K562 (cell line): ENCODE measurements at regions of chr17 and their contacts with region 1.

Region 1: DNA sequence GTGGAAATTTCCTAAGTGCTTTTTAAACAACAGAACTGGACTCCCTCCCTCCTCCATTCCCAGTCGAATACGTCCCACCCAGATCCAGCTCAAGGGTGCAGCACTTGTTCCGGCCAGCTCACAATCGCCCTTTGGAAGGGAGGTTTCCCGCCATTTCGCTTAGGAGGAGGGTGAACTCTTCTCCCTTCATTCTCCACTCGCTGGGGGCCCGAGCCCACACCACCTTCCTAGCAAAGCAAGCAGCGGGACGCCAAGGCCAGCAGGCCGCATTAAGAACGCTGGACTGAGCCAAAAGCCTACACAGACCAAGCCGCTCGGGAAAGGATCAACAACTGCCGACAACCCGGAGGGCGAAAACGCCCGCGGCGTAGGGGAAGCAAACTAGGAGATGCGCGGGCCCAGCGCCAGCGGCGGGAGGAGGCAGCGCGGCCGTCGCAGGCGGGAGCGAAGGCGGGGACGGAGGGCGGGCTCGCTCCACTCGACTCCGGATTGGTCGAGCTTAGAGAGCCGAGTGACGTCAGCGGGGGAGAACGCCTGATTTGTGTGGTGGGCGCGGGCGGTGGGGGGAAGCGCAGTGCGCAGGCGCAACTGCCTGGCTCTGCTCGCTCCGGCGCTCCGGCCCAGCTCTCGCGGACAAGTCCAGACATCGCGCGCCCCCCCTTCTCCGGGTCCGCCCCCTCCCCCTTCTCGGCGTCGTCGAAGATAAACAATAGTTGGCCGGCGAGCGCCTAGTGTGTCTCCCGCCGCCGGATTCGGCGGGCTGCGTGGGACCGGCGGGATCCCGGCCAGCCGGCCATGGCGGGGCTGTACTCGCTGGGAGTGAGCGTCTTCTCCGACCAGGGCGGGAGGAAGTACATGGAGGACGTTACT is at the start of gene PPM1D:
- DNase-seq: peak; percentile 99
- ATAC-seq: peak; percentile 90
- H3K4me3 ChIP-seq: peak within 1 kb of the TSS; percentile 70
- H3K27ac ChIP-seq: peak within 1 kb of the TSS; percentile 97
- H3K4me1 ChIP-seq: peaks cover 10 to 23% of the 10 kb centered on the region in 2 experiments; a peak in 4 of 5 replicates
- H3K27me3 ChIP-seq: no peaks in the 10 kb centered on the region
- CTCF ChIP-seq: 0 out of 6 replicates have a peak, but pooled peaks of 1 of the 3 experiments have one; percentile 1
- EP300 ChIP-seq: no peak
- POLR2A ChIP-seq: peak; percentile 99
- RAD21 ChIP-seq: no peak
- polyA plus RNA-seq, gene PPM1D: 2.1 to 2.7 TPM

Region 2: GRCh38 chr17:60392042-60392844 is 207.6 kb before region 1 on chr17 and contains the start of gene USP32:
- CTCF ChIA-PET with region 1: no interaction called
- POLR2A ChIA-PET with region 1: no interaction called
- in situ Hi-C with region 1: no loop called
- intact Hi-C with region 1: loop called (anchors 5 kb)
- DNase-seq: peak; percentile 93 to 98 (median 94)
- ATAC-seq: peak; percentile 86
- H3K4me3 ChIP-seq: peak within 1 kb of the TSS; percentile 84
- H3K27ac ChIP-seq: peak within 1 kb of the TSS; percentile 94
- H3K4me1 ChIP-seq: peaks cover 3 to 11% of the 10 kb centered on the region in 2 experiments
- H3K27me3 ChIP-seq: no peaks in the 10 kb centered on the region
- CTCF ChIP-seq: peak; percentile 29 to 47 (median 40); a peak in 4 of 6 replicates
- EP300 ChIP-seq: peak; percentile 81
- POLR2A ChIP-seq: peak; percentile 94
- RAD21 ChIP-seq: no peak
- polyA plus RNA-seq, gene USP32: 18.0 to 19.7 TPM

Region 3: DNA sequence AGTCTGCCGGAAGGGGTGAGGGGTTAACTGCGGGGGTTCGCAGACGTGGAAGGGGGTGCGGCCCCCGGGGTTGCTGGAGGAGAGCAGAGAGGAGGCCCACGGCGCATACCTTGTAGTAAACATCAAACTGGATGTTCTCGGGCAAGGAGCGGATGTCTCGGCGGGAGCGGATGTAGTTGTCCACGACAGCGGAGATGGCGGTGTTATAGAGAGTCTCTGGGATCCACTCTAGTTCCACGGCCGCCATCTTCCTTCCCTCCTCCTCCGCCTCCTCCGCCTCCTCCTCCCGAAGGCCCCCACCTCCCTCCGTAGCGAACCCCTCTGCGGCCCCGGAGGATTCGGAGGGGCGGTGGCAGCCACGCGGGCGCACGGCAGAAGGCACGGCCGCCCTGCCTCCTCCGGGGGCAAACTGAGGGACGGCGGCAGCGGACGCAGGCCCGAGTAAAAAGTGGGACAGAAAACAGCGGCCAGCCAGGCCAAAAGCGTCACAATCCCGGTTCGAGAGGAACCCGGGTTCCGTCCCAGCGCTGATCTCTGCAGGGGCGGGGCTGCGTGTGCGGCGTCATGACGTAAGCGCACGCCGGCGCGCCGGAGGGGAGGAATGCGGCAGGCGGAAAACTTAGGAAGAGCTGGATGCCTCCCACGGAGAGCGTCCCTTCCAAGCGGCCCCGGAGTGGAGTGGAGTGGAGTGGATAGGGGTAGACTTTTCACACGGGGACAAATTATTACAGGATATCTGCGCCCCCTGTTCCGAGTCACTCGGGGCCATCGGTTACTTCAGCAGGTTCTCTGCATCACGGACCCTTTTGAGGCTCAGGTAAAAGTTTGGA is 74.0 kb before region 1 on chr17 and contains the start of gene APPBP2:
- CTCF ChIA-PET with region 1: no interaction called
- POLR2A ChIA-PET with region 1: interaction called, 3 read pairs
- in situ Hi-C with region 1: no loop called
- intact Hi-C with region 1: loop called (anchors 5 kb)
- DNase-seq: peak; percentile 83 to 90 (median 90)
- ATAC-seq: peak; percentile 93
- H3K4me3 ChIP-seq: peak within 1 kb of the TSS; percentile 96
- H3K27ac ChIP-seq: peak within 1 kb of the TSS; percentile 90
- H3K4me1 ChIP-seq: no peaks in the 10 kb centered on the region
- H3K27me3 ChIP-seq: no peaks in the 10 kb centered on the region
- CTCF ChIP-seq: no peak
- EP300 ChIP-seq: no peak
- POLR2A ChIP-seq: peak; percentile 91
- RAD21 ChIP-seq: peak in 1 of 2 experiments; percentile 9; a peak in 1 of 4 replicates
- polyA plus RNA-seq, gene APPBP2: 2.7 to 3.4 TPM

Region 4: GRCh38 chr17:60613325-60613724 is 13.5 kb after region 1 on chr17:
- CTCF ChIA-PET with region 1: no interaction called
- POLR2A ChIA-PET with region 1: interaction called, 19 read pairs
- in situ Hi-C with region 1: no loop called
- intact Hi-C with region 1: no loop called
- DNase-seq: no peak
- ATAC-seq: no peak
- H3K4me3 ChIP-seq: no peak overlapping the region
- H3K27ac ChIP-seq: no peak overlapping the region
- H3K4me1 ChIP-seq: 0 out of 5 replicates have a peak, but pooled peaks cover 0 to 4% of the 10 kb centered on the region in 2 experiments
- H3K27me3 ChIP-seq: no peaks in the 10 kb centered on the region
- CTCF ChIP-seq: no peak
- EP300 ChIP-seq: no peak
- POLR2A ChIP-seq: no peak
- RAD21 ChIP-seq: no peak

Region 5: GRCh38 chr17:60656499-60656898 is 56.6 kb after region 1 on chr17:
- CTCF ChIA-PET with region 1: no interaction called
- POLR2A ChIA-PET with region 1: no interaction called
- in situ Hi-C with region 1: no loop called
- intact Hi-C with region 1: no loop called
- DNase-seq: peak; percentile 22 to 51 (median 25)
- ATAC-seq: peak; percentile 76
- H3K4me3 ChIP-seq: no peak overlapping the region
- H3K27ac ChIP-seq: no peak overlapping the region
- H3K4me1 ChIP-seq: no peaks in the 10 kb centered on the region
- H3K27me3 ChIP-seq: no peaks in the 10 kb centered on the region
- CTCF ChIP-seq: peak in 2 of 3 experiments; percentile 10 to 23; a peak in 1 of 6 replicates
- EP300 ChIP-seq: no peak
- POLR2A ChIP-seq: no peak
- RAD21 ChIP-seq: no peak